Ascending aorta (tissue), 2 donors: ENCODE measurements at regions of chr11 and their contacts with region 1.

Region 1: GRCh38 chr11:74929431-74930363 is 19.2 kb downstream of the XRRA1 start:
- DNase-seq: peak; percentile 25 to 82
- H3K4me3 ChIP-seq: no peak overlapping the region
- H3K27ac ChIP-seq: no peak overlapping the region
- H3K4me1 ChIP-seq: no peaks in the 10 kb centered on the region
- H3K27me3 ChIP-seq: no peaks in the 10 kb centered on the region
- CTCF ChIP-seq: peak; percentile 49 to 87 (median 69)

Region 2: GRCh38 chr11:74766905-74767304 is 162.8 kb before region 1 on chr11:
- intact Hi-C with region 1: no loop called
- DNase-seq: no peak
- H3K4me3 ChIP-seq: no peak overlapping the region
- H3K27ac ChIP-seq: no peak overlapping the region
- H3K4me1 ChIP-seq: no peaks in the 10 kb centered on the region
- H3K27me3 ChIP-seq: no peaks in the 10 kb centered on the region
- CTCF ChIP-seq: no peak

Region 3: GRCh38 chr11:74966651-74967050 is 37.0 kb after region 1 on chr11:
- intact Hi-C with region 1: no loop called
- DNase-seq: no peak
- H3K4me3 ChIP-seq: no peak overlapping the region
- H3K27ac ChIP-seq: no peak overlapping the region
- H3K4me1 ChIP-seq: no peaks in the 10 kb centered on the region
- H3K27me3 ChIP-seq: no peaks in the 10 kb centered on the region
- CTCF ChIP-seq: no peak

Region 4: DNA sequence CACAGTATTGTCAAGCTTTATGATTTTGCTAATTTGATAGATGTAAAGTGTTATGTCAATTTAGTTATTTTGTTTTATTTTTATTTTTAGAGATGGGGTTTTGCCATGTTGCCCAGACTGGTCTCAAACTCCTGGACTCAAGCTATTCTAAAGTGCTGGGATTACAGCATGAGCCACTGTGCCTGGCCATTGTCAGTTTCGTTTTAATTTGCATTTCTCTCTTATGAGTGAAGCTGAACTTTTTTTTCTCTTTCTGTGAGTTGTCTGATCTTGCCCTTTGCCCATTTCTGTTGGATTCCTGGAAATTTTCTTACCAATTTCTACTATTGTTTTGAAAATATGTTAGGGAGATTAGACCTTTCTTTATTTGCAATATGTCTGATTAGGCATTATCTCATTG is 74.5 kb after region 1 on chr11:
- intact Hi-C with region 1: loop called (anchors 10 kb)
- DNase-seq: no peak
- H3K4me3 ChIP-seq: no peak overlapping the region
- H3K27ac ChIP-seq: no peak overlapping the region
- H3K4me1 ChIP-seq: no peaks in the 10 kb centered on the region
- H3K27me3 ChIP-seq: no peaks in the 10 kb centered on the region
- CTCF ChIP-seq: no peak

Region 5: DNA sequence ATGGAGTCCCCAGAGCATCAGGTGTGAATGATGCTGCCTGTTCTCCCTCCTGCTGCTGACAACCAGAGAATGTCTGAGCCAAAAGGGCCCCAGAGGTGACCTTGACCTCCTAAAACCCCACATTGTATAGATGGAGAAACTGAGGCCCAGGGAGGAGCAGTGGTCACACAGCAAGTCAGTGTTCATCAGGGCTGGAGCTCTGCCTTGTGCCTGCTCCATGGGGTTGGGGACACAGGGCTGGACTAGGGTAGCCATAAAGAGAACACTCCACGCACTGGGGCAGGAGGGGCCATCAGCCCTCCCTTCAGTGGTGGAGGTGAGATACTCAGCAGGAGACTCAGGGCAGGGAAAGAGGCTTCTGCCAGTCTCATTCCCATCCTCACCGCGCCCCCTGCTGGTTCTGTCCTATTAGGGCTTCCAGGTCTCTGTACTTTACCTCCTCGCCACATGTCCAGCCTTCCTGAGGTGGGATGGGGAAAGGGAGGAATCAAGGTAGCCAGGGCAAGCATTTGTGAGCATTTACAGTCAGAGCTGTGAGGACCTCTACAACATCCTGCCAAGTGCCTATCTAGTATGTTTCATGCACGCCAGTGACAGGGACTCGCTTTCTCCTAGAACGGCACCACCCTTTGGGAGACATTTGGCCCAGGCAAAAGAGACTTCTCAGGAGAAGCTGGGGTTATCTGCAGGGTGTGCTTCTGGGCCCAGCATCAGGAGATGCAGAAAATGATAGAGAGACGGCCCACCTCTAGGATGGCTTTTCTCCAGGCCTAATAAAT is 102.3 kb after region 1 on chr11:
- intact Hi-C with region 1: loop called (anchors 5 kb)
- DNase-seq: peak in 1 of 2 donors; percentile 68
- H3K4me3 ChIP-seq: no peak overlapping the region
- H3K27ac ChIP-seq: no peak overlapping the region
- H3K4me1 ChIP-seq: no peaks in the 10 kb centered on the region
- H3K27me3 ChIP-seq: no peaks in the 10 kb centered on the region
- CTCF ChIP-seq: peak in 2 of 3 experiments; percentile 41 to 53

Region 6: DNA sequence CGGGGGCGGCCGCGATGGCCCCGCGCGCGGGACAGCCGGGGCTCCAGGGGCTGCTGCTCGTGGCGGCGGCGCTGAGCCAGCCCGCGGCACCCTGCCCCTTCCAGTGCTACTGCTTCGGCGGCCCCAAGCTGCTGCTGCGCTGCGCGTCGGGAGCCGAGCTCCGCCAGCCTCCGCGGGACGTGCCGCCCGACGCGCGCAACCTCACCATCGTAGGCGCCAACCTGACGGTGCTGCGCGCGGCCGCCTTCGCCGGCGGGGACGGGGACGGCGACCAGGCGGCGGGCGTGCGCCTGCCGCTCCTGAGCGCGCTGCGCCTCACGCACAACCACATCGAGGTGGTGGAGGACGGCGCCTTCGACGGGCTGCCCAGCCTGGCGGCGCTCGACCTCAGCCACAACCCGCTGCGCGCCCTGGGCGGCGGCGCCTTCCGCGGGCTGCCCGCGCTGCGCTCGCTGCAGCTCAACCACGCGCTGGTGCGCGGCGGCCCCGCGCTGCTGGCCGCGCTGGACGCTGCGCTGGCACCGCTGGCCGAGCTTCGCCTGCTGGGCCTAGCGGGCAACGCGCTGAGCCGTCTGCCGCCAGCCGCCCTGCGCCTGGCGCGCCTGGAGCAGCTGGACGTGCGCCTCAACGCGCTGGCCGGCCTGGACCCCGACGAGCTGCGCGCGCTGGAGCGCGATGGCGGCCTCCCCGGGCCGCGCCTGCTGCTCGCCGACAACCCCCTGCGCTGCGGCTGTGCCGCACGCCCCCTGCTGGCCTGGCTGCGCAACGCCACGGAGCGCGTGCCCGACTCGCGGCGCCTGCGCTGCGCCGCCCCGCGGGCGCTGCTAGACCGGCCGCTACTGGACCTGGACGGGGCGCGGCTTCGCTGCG is 311.6 kb after region 1 on chr11:
- intact Hi-C with region 1: loop called (anchors 2 kb)
- DNase-seq: peak; percentile 24 to 85
- H3K4me3 ChIP-seq: peak overlapping the region; percentile 45 to 65
- H3K27ac ChIP-seq: no peak overlapping the region
- H3K4me1 ChIP-seq: peaks cover 2 to 4% of the 10 kb centered on the region in 2 donors
- H3K27me3 ChIP-seq: peaks cover 5% of the 10 kb centered on the region
- CTCF ChIP-seq: peak; percentile 8 to 97 (median 33)

Region 7: DNA sequence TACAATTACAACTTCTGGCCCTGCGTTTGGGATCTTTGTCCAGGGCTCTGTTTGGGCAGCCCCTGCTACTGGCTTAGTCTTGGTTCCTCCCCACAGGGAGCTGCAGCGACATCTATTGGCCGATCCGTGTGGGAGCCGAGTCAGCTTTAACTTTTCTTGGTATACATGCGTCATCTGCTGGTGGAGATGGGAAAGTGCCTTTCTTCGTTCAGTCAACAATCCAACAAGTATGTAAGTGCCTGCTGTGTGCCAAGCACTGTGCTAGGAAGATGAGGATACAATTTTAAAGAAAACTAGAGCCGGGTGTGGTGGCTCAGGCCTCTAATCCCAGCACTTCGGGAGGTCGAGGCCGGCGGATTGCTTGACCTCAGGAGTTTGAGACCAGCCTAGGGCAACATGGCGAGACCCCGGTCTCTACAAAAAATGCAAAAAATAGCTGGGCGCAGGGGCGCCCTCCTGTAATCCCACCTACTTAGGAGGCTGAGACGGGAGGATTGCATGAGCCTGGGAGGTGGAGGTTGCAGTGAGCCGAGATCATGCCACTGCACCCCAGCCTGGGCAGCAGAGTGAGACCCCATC is 319.1 kb after region 1 on chr11:
- intact Hi-C with region 1: loop called (anchors 1 kb)
- DNase-seq: peak; percentile 34 to 93
- H3K4me3 ChIP-seq: no peak overlapping the region
- H3K27ac ChIP-seq: no peak overlapping the region
- H3K4me1 ChIP-seq: no peaks in the 10 kb centered on the region
- H3K27me3 ChIP-seq: no peaks in the 10 kb centered on the region
- CTCF ChIP-seq: peak; percentile 96 to 99 (median 97)